ENCODE measurements at regions of chr1 and their contacts with region 1.

Region 1: GRCh38 chr1:245045087-245045881 is 109.5 kb upstream of the KIF26B start:
- DNase-seq: no peak
- ATAC-seq: no peak
- H3K4me3 ChIP-seq: no peak overlapping the region
- H3K4me3 Mint-ChIP-seq: no peak overlapping the region
- H3K27ac ChIP-seq: no peak overlapping the region
- H3K27ac Mint-ChIP-seq: no peak overlapping the region
- H3K4me1 ChIP-seq: no peaks in the 10 kb centered on the region
- H3K4me1 Mint-ChIP-seq: peaks cover 0 to 3% (median 2%) of the 10 kb centered on the region in 3 donors
- H3K27me3 ChIP-seq: no peaks in the 10 kb centered on the region
- H3K27me3 Mint-ChIP-seq: no peaks in the 10 kb centered on the region

Region 2: GRCh38 chr1:244599937-244600350 is 445.3 kb before region 1 on chr1:
- CTCF ChIA-PET with region 1: interaction called, 19 to 53 read pairs
- POLR2A ChIA-PET with region 1: no interaction called
- DNase-seq: peak in 15 of 35 experiments; percentile 1 to 42 (median 9)
- ATAC-seq: peak; percentile 90 to 97 (median 94)
- H3K4me3 ChIP-seq: no peak overlapping the region
- H3K4me3 Mint-ChIP-seq: peak overlapping the region in 2 of 3 donors; percentile 56 to 78
- H3K27ac ChIP-seq: no peak overlapping the region
- H3K27ac Mint-ChIP-seq: peak overlapping the region; percentile 94 to 97
- H3K4me1 ChIP-seq: no peaks in the 10 kb centered on the region
- H3K4me1 Mint-ChIP-seq: peaks cover 0 to 14% (median 12%) of the 10 kb centered on the region in 3 donors
- H3K27me3 ChIP-seq: no peaks in the 10 kb centered on the region
- H3K27me3 Mint-ChIP-seq: peaks cover 0 to 10% of the 10 kb centered on the region in 2 donors

Region 3: GRCh38 chr1:244801246-244801645 is 244.0 kb before region 1 on chr1:
- CTCF ChIA-PET with region 1: interaction called, 75 to 95 read pairs
- POLR2A ChIA-PET with region 1: no interaction called
- DNase-seq: peak; percentile 9 to 77 (median 43)
- ATAC-seq: peak; percentile 82 to 93 (median 89)
- H3K4me3 ChIP-seq: no peak overlapping the region
- H3K4me3 Mint-ChIP-seq: no peak overlapping the region
- H3K27ac ChIP-seq: no peak overlapping the region
- H3K27ac Mint-ChIP-seq: no peak overlapping the region
- H3K4me1 ChIP-seq: peaks cover 0 to 6% of the 10 kb centered on the region in 2 experiments
- H3K4me1 Mint-ChIP-seq: peaks cover 2 to 8% (median 3%) of the 10 kb centered on the region in 3 donors
- H3K27me3 ChIP-seq: peaks cover 0 to 7% of the 10 kb centered on the region in 2 experiments
- H3K27me3 Mint-ChIP-seq: no peaks in the 10 kb centered on the region

Region 4: GRCh38 chr1:245031041-245031440 is 14.2 kb before region 1 on chr1:
- CTCF ChIA-PET with region 1: interaction called, 5 to 14 read pairs
- POLR2A ChIA-PET with region 1: no interaction called
- DNase-seq: no peak
- ATAC-seq: no peak
- H3K4me3 ChIP-seq: no peak overlapping the region
- H3K4me3 Mint-ChIP-seq: no peak overlapping the region
- H3K27ac ChIP-seq: no peak overlapping the region
- H3K27ac Mint-ChIP-seq: no peak overlapping the region
- H3K4me1 ChIP-seq: peaks cover 0 to 4% of the 10 kb centered on the region in 2 experiments
- H3K4me1 Mint-ChIP-seq: peaks cover 7 to 17% (median 14%) of the 10 kb centered on the region in 3 donors
- H3K27me3 ChIP-seq: no peaks in the 10 kb centered on the region
- H3K27me3 Mint-ChIP-seq: no peaks in the 10 kb centered on the region

Measured in T-cell (primary cell).